ENCODE measurements at regions of chr19 and their contacts with region 1.

Region 1: GRCh38 chr19:42244347-42245220 is 2.2 kb upstream of the GSK3A start:
- DNase-seq: peak; percentile 69 to 97
- H3K4me3 ChIP-seq: peak overlapping the region; percentile 93 to 95
- H3K27ac ChIP-seq: peak overlapping the region; percentile 84 to 97
- H3K4me1 ChIP-seq: peaks cover 16 to 47% of the 10 kb centered on the region in 2 donors
- H3K27me3 ChIP-seq: no peaks in the 10 kb centered on the region
- CTCF ChIP-seq: peak; percentile 65 to 67 (median 66)

Region 2: DNA sequence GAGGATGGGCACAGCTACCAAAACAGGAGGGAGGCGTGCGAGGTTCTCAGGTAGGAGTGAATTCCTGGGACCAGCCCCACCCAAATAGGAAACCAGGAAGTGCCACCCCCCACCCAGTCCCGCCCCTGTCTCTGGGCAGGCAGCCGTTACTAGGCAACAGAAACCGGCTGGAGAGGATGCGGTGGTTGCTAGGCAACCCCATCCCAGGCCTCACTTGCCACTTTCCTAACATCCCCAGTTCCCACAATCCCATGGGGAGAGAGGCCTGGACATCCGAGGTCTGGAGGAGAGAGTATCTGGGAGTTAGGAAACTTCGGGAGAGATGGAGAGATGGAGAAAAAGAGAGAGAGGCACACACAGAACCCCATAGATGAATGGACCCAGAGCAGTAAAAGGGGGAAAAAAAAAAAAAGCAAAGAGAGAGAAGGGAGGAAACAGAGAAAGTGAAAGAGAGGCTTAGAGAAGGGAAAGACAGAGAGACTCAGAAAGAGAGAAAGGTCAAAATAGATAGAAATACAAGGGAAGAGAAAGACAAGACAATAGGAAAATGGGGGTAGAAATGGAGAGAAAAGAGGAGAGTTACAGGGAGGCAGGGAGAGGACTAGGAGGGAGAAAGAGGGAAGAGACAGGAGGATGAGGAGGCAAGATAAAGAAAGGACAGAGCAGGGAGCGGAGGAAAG is 178.4 kb before region 1 on chr19:
- intact Hi-C with region 1: no loop called
- DNase-seq: no peak
- H3K4me3 ChIP-seq: no peak overlapping the region
- H3K27ac ChIP-seq: no peak overlapping the region
- H3K4me1 ChIP-seq: peaks cover 0 to 7% of the 10 kb centered on the region in 2 donors
- H3K27me3 ChIP-seq: no peaks in the 10 kb centered on the region
- CTCF ChIP-seq: no peak

Region 3: DNA sequence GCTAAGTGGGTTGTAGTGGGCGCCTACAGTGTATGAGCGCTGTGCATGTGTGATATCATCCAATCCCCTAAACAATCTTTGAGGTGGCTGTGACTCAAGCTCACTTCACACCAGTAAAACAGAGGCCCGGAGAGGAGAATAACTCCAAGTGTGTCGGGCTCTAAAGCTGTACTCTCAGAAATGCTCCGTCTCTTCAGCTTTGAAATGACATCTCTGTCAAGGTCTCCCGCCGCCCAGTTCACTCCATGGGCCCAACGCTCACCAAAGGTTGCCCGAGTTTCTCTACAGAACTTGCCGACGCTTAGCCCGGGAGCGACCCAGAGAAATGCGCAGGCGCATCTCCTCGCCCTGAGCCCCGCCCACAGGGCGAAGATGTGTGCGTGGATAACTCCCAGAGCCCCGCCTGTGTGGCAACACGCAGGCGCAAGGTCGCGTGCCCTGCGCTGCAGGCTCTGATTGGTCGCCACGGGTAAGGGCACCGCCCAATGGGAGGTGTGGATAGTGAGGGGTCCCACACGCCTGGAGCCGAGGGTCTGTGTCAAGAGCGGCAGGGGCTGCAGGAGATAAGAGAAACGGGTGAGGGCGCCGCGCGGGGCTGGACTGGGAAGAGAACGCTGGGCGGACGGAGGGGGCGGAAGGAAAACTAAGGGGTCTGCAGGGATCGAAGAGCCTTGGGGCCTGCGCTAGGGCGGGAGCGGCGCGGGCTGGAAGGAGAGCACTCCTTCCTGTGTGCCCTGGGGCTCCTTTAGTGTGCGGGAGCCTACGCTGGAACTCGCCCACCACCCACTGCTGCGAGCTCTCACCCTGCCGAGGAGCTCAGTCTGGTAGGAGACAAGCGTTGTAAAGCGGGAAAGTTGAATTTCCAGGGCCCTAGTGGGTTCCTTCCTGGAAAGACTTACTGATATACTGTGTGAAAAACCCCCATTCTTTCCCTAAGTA is 24.5 kb before region 1 on chr19 and contains the start of gene ZNF526:
- intact Hi-C with region 1: loop called (anchors 1 kb)
- DNase-seq: peak; percentile 94 to 98
- H3K4me3 ChIP-seq: peak within 1 kb of the TSS; percentile 61 to 93
- H3K27ac ChIP-seq: peak within 1 kb of the TSS; percentile 84 to 90
- H3K4me1 ChIP-seq: peaks cover 0 to 34% of the 10 kb centered on the region in 2 donors
- H3K27me3 ChIP-seq: no peaks in the 10 kb centered on the region
- CTCF ChIP-seq: no peak
- total RNA-seq, gene ZNF526: 7.0 TPM

Region 4: DNA sequence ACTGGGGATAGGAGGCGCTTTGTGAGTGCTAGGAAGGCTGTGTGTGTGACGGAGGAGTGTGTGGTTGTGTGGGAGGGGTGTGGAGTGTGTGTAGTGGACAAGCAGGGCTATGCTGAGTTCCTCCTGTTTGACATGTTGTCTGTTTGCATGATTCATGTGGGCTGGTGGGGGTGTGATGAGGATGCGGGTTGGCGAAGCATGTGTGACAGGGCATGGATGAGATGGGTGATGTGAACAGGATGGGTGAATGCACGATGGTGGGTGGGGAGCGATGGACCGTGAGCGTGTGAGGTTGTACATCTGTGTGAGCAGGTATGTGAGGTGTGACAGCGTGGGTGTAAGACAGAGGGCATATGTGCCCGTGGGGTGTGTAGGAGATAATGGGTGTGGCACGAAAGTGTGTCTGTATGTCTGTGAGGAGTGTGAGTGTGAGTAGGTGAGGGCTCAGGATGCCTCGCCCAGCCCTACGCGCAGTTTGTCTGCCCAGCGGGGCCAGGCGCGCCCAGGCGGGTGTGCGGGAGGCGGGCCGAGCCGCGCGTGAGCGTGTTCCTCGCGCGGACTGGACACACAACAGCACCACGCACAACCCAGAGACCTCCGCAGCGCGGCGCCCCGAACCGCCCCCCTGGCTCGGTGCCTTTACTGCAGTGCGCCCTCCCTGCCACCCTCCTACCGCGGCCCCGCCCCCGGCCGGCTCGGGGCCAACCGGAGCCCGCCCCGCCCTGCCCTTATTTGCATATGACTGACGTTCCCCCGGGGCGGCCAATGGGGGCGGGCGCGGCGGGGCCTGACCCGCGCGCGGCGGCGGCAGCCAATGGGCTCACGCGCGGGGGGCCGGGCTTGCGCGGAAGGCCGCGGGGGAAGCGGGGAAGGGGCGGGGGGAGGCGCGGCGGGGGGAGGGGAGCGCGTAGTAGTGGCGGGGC is 38.8 kb after region 1 on chr19:
- intact Hi-C with region 1: loop called (anchors 1 kb)
- DNase-seq: peak; percentile 87 to 99
- H3K4me3 ChIP-seq: peak overlapping the region; percentile 85 to 86
- H3K27ac ChIP-seq: peak overlapping the region; percentile 93 to 96
- H3K4me1 ChIP-seq: peaks cover 46 to 62% of the 10 kb centered on the region in 2 donors
- H3K27me3 ChIP-seq: no peaks in the 10 kb centered on the region
- CTCF ChIP-seq: no peak

Region 5: GRCh38 chr19:42325273-42325895 is 80.8 kb after region 1 on chr19 and contains the start of gene MEGF8:
- intact Hi-C with region 1: loop called (anchors 1 kb)
- DNase-seq: peak; percentile 92 to 99
- H3K4me3 ChIP-seq: peak within 1 kb of the TSS; percentile 66 to 85
- H3K27ac ChIP-seq: peak within 1 kb of the TSS; percentile 38 to 48
- H3K4me1 ChIP-seq: peaks cover 5 to 29% of the 10 kb centered on the region in 2 donors
- H3K27me3 ChIP-seq: peaks cover 11% of the 10 kb centered on the region
- CTCF ChIP-seq: peak; percentile 81 to 89 (median 82)
- total RNA-seq, gene MEGF8: 61.8 TPM

Measured in ascending aorta (tissue), 2 donors.